Activated B cell treated with CpG ODN at 0.5 μM for 24 hours (primary cell): ENCODE measurements at regions of chr9 and their contacts with region 1.

Region 1: DNA sequence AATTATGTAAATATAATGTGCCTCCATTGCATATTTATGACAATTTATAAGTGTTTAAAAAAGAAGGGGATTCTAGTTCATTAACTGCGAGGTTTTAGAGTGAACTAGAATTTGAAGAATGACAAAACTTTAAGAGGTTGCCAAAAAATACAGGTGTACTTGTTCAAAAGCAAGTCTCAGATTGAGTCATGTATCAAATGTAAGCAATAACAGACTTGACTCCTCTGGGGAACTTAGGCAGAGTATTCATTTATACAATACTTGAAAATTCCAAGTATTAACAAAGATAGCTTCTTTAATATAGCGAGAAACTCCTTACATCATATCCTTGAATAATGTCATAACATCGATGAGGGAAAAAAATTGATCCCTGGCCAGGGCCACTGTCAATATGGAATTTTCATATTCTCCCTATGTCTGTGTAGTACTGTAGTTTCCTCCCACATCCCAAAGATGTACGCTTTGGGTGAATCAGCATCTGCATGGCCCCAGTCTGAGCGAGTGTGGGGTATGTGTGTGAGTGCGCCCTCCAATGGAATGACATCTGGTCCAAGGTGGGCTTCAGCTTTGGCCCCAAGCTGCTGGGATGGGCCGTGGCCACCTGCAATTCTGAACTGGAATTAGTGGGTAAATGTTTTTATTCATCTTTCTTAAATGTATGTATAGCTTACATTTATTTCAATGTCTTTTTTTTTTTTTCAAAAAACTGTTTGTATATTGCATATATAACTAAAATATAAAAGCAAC is 70.1 kb downstream of the RIC1 start:
- DNase-seq: no peak
- ATAC-seq: no peak
- H3K4me3 Mint-ChIP-seq: no peak overlapping the region
- H3K27ac Mint-ChIP-seq: no peak overlapping the region
- H3K4me1 Mint-ChIP-seq: peaks cover 28% of the 10 kb centered on the region
- H3K27me3 Mint-ChIP-seq: no peaks in the 10 kb centered on the region
- CTCF ChIP-seq: no peak

Region 2: DNA sequence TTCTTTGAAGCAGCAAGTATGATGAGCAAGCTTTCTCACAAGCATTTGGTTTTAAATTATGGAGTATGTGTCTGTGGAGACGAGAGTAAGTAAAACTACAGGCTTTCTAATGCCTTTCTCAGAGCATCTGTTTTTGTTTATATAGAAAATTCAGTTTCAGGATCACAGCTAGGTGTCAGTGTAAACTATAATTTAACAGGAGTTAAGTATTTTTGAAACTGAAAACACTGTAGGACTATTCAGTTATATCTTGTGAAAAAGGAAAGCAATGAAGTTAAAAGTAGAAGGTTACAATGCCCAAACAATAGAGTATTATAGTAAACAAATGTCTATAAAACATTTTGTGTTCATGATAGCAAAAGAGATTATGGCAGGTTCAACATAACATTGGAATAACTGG is 625.3 kb before region 1 on chr9:
- CTCF ChIA-PET with region 1: no interaction called
- POLR2A ChIA-PET with region 1: no interaction called
- intact Hi-C with region 1: no loop called
- DNase-seq: no peak
- ATAC-seq: no peak
- H3K4me3 Mint-ChIP-seq: no peak overlapping the region
- H3K27ac Mint-ChIP-seq: no peak overlapping the region
- H3K4me1 Mint-ChIP-seq: no peaks in the 10 kb centered on the region
- H3K27me3 Mint-ChIP-seq: no peaks in the 10 kb centered on the region
- CTCF ChIP-seq: no peak

Region 3: DNA sequence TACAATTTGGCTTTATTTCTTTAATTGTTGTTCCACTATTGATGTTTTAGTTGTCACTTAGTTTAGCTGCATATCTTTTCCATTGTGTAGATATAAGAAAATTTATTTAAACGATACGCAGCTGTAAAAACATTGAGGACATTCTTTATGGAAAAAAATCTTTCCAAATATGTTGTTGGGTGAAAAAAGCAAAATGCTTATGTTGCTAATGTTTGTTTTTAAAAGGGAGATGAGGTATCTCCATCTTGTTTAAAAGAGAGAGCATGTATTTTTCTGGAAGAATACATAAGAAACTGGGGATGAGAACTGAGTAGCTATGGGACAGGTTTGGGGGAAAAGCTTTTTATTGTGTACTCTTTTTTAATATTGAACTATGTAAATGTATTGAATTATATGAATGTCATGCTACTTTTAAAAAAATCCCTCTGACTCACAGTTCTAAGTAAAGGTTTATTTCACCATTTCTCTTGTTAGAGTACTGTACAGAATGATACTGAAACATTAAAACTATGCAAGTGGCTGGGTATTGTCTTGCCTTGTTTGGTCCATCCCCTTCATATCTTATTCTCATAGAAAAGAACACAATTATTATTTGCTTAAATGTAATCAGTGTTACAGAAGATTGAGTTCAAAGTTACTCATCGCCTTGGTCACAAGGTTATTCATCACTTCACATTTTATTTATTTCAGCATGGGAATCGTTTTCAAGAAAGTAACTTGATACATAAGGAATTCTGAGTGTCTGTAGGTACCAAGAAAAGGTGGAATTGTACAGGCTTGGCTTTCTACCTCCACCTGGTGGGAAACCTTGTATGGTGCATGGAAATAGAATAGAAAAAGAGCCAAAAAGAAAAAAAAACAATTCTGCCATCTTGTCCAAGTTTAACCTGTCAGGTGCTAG is 15.8 kb after region 1 on chr9:
- CTCF ChIA-PET with region 1: no interaction called
- POLR2A ChIA-PET with region 1: no interaction called
- intact Hi-C with region 1: loop called (anchors 2 kb)
- DNase-seq: no peak
- ATAC-seq: no peak
- H3K4me3 Mint-ChIP-seq: no peak overlapping the region
- H3K27ac Mint-ChIP-seq: no peak overlapping the region
- H3K4me1 Mint-ChIP-seq: peaks cover 36% of the 10 kb centered on the region
- H3K27me3 Mint-ChIP-seq: no peaks in the 10 kb centered on the region
- CTCF ChIP-seq: no peak